PC-3 (cell line): ENCODE measurements at regions of chr17 and their contacts with region 1.

Region 1: GRCh38 chr17:64778240-64779097 is 116.4 kb upstream of the SMURF2 start:
- DNase-seq: peak; percentile 40
- ATAC-seq: no peak
- H3K4me3 ChIP-seq: peak overlapping the region; percentile 58
- H3K27ac ChIP-seq: no peak overlapping the region
- H3K4me1 ChIP-seq: peaks cover 9% of the 10 kb centered on the region; the same call in 1 of the 2 replicates
- H3K27me3 ChIP-seq: no peaks in the 10 kb centered on the region
- CTCF ChIP-seq: no peak

Region 2: DNA sequence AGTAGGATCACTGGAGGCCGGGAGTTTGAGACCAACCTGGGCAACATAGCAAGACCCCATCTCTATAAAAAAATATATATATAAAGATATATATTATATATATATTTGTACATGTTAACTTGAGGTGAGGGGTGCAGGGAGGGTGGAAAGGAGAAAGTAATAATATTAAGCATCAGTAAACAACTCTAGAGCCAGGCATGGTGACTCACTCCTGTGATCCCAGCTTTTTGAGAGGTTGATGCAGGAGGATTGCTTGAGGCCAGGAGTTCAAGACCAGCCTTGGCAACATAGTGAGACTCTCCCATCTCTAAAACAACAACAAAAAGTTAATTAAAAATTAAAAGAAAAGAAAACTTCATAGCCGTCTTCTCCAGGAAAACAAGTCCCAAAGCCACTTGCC is 54.7 kb before region 1 on chr17:
- CTCF ChIA-PET with region 1: interaction called, 10 read pairs
- POLR2A ChIA-PET with region 1: no interaction called
- intact Hi-C with region 1: no loop called
- DNase-seq: no peak
- ATAC-seq: peak; percentile 28; the same call in 1 of the 2 replicates
- H3K4me3 ChIP-seq: no peak overlapping the region
- H3K27ac ChIP-seq: no peak overlapping the region
- H3K4me1 ChIP-seq: peaks cover 7% of the 10 kb centered on the region
- H3K27me3 ChIP-seq: no peaks in the 10 kb centered on the region
- CTCF ChIP-seq: no peak

Region 3: GRCh38 chr17:64920026-64920418 is 141.6 kb after region 1 on chr17:
- CTCF ChIA-PET with region 1: interaction called, 6 read pairs
- POLR2A ChIA-PET with region 1: no interaction called
- intact Hi-C with region 1: loop called (anchors 5 kb)
- DNase-seq: peak; percentile 34
- ATAC-seq: peak; percentile 8
- H3K4me3 ChIP-seq: peak overlapping the region; percentile 79
- H3K27ac ChIP-seq: no peak overlapping the region
- H3K4me1 ChIP-seq: peaks cover 5% of the 10 kb centered on the region
- H3K27me3 ChIP-seq: no peaks in the 10 kb centered on the region
- CTCF ChIP-seq: no peak

Region 4: DNA sequence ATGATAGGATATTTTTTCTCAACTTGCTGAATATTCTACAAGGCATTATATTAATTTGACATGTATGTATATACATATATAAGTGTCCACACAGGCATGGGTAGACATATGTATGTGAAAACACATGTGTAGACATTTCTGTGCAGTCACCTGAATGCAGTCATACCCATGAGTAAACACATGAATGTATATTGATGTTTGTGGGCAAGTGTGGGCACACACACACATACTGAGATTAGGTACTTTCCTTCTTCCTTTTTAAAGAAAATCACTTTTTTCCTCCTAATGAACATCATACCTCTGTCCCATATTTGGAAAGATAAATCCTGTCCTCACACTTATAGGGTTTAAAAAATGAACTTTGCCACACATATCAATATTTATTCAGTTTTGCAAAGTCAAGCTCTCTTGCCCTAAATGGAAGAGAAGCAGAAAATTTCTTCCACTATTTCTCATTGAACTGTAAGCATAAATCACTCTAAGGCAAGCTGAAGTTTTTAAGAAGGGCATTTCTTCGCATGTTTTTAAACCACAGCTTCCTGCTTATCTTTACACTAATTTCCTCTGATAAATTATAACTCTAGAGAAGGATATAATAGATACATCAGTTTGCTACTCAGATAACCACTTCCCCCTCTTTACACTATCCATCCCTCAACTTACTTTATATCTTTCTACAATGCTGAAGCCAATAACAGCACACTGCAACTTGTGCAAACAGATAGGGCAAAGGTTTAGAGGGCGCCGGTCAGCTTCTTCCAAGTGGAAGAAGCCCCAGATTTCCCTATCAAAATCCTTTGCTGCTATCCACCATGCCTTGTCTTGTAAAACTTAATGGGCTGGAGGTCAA is 190.4 kb after region 1 on chr17:
- CTCF ChIA-PET with region 1: no interaction called
- POLR2A ChIA-PET with region 1: no interaction called
- intact Hi-C with region 1: loop called (anchors 5 kb)
- DNase-seq: no peak
- ATAC-seq: no peak
- H3K4me3 ChIP-seq: no peak overlapping the region
- H3K27ac ChIP-seq: no peak overlapping the region
- H3K4me1 ChIP-seq: peaks cover 24% of the 10 kb centered on the region
- H3K27me3 ChIP-seq: no peaks in the 10 kb centered on the region
- CTCF ChIP-seq: no peak